Left ventricle myocardium inferior (tissue), 1 donor: ENCODE measurements at regions of chr22 and their contacts with region 1.

Region 1: DNA sequence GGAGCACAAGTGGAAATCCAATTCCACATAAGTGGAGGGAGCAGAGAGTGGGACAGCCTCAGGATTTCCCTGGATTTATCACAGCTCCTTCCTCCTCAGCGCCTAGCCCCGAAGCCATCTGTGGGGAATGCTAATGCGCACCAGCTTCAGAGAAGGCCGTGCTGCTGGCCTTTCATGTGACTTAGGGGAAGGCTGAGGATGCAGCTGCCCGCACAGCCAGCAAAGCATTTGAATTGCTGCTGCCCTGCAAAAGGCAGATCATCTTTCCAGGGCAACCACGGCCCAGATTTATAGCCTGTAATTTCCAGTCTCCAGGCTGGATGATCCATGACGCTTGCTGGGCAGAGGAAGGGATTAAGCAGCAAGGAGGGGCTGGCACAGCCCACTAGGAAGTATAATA is 29.9 kb downstream of the SYN3 start:
- DNase-seq: no peak
- H3K4me3 ChIP-seq: no peak overlapping the region
- H3K27ac ChIP-seq: no peak overlapping the region
- H3K4me1 ChIP-seq: peaks cover 4% of the 10 kb centered on the region
- H3K27me3 ChIP-seq: peaks cover 93% of the 10 kb centered on the region
- CTCF ChIP-seq: no peak

Region 2: DNA sequence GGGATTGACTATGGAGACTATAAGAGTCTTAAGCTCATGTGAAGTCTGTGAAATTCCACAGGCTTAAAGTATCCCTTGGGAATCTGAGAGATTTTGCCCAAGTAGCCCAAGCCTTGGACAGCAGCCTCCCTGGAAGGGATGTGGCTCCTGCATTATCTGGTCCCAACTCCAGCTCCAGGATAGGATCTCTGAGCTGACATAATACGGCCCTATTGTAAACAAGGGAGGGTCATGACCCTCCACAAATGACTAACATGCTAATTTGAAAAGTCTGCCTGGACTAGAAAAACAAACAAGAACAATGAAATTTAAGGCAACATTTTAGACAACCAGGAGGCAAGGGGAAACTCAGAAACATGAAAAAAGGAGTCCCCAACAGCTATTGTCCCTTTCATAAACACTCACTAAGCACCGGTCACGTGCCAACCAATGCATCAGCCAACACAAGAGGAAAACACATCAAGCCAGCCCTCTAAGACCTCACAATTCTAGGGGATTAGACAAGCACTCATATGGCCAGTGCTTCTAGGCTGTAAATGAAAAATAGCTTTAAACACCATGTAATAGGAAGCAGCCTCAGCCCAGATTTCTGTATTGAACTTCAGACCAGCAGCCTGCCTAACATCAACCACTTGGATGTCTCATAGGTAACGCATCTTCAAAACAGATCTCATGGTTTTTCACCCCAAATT is 327.9 kb before region 1 on chr22:
- intact Hi-C with region 1: no loop called
- DNase-seq: no peak
- H3K4me3 ChIP-seq: no peak overlapping the region
- H3K27ac ChIP-seq: peak overlapping the region; percentile 80
- H3K4me1 ChIP-seq: peaks cover 24% of the 10 kb centered on the region
- H3K27me3 ChIP-seq: no peaks in the 10 kb centered on the region
- CTCF ChIP-seq: no peak

Region 3: GRCh38 chr22:33209930-33210784 is 181.9 kb after region 1 on chr22:
- intact Hi-C with region 1: loop called (anchors 10 kb)
- DNase-seq: no peak
- H3K4me3 ChIP-seq: no peak overlapping the region
- H3K27ac ChIP-seq: no peak overlapping the region
- H3K4me1 ChIP-seq: no peaks in the 10 kb centered on the region
- H3K27me3 ChIP-seq: peaks cover 38% of the 10 kb centered on the region
- CTCF ChIP-seq: peak; percentile 64